A549 (cell line): ENCODE measurements at regions of chr17 and their contacts with region 1.

Region 1: DNA sequence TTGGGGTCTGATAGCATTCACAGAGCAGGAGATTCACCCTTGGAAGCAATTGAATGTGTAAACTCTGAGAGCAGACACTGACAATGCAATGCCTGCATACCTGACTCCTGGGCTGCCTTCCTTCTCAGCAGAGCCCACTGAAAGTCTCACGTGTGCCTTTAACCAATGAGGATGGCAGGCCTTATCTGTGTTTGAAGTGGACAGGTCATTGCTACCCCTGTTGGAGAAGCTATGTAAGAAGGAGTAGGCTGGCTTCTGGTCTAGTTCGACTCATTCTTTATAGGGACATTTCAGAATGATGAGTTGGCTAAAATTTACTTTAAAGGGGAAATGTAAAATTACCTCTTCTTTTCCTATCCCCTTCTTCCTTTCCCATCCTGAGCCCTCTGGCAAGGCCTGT is 446.3 kb downstream of the SLC39A11 start:
- DNase-seq: peak in 1 of 2 experiments; percentile 17
- ATAC-seq: peak in 1 of 2 experiments; percentile 45; a peak in 2 of 6 replicates
- H3K4me3 ChIP-seq: no peak overlapping the region
- H3K27ac ChIP-seq: peak overlapping the region in 1 of 2 experiments; percentile 22; a peak in 2 of 6 replicates
- H3K4me1 ChIP-seq: no peaks in the 10 kb centered on the region
- CTCF ChIP-seq: no peak
- EP300 ChIP-seq: no peak
- POLR2A ChIP-seq: no peak
- RAD21 ChIP-seq: no peak

Region 2: GRCh38 chr17:72393553-72393952 is 252.6 kb before region 1 on chr17:
- CTCF ChIA-PET with region 1: no interaction called
- POLR2A ChIA-PET with region 1: no interaction called
- DNase-seq: peak; percentile 72 to 74
- ATAC-seq: peak; percentile 26 to 58; a peak in 4 of 6 replicates
- H3K4me3 ChIP-seq: no peak overlapping the region
- H3K27ac ChIP-seq: peak overlapping the region; percentile 76 to 85
- H3K4me1 ChIP-seq: peaks cover 85% of the 10 kb centered on the region
- CTCF ChIP-seq: no peak
- EP300 ChIP-seq: peak in 1 of 2 experiments; percentile 41; a peak in 2 of 5 replicates
- POLR2A ChIP-seq: no peak
- RAD21 ChIP-seq: no peak; a peak in 1 of 5 replicates

Region 3: GRCh38 chr17:72580321-72581127 is 65.7 kb before region 1 on chr17:
- CTCF ChIA-PET with region 1: no interaction called
- POLR2A ChIA-PET with region 1: no interaction called
- DNase-seq: peak in 1 of 2 experiments; percentile 50
- ATAC-seq: peak; percentile 42 to 47
- H3K4me3 ChIP-seq: no peak overlapping the region
- H3K27ac ChIP-seq: peak overlapping the region in 1 of 2 experiments; percentile 45; a peak in 3 of 6 replicates
- H3K4me1 ChIP-seq: peaks cover 58% of the 10 kb centered on the region
- CTCF ChIP-seq: no peak
- EP300 ChIP-seq: no peak
- POLR2A ChIP-seq: no peak
- RAD21 ChIP-seq: no peak

Region 4: DNA sequence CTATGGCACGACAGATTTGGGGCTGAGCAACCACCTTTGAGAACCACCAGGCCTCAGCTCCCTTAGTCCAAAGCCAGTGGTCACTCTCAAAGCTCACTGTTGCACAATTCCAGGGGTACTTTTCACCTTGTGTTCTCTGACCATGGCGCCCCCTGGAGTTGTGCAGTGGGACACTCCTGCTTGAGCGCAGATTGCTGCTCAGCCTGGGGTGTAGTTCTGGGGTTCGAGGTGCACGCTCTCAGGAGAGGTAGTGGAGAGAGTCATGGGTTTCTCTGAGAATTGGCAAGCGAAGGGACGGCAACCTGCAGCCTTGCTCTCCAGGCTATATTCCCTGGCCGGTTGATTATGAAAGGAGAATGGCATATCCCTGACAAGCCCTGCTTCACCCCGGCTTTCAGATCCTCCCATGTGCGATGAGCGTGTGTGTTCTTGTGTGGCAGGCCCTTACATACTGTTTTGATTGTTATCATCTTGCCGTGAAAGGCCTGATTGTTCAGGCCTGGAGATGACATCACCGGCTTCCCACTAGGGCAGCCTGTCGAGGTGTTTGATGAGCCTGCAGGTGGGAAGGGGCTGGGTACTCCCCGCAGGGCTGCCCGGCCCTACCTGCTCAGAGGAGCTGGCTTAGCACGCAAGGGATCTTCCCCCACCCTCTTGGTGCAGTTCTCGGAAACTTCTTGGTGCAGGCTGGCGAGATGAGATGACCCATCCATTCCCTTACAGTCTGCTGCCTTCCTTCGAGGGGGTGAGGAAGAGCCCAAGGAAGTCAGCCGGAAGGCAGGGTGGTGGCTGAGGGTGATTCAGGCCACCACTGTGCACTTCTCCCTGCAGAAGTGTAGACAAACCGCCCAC is 15.1 kb after region 1 on chr17:
- CTCF ChIA-PET with region 1: interaction called, 10 read pairs
- POLR2A ChIA-PET with region 1: no interaction called
- DNase-seq: no peak
- ATAC-seq: no peak
- H3K4me3 ChIP-seq: no peak overlapping the region
- H3K27ac ChIP-seq: peak overlapping the region in 1 of 2 experiments; percentile 32; a peak in 3 of 6 replicates
- H3K4me1 ChIP-seq: peaks cover 17% of the 10 kb centered on the region
- CTCF ChIP-seq: 0 out of 3 replicates have a peak, but pooled peaks have one; percentile 23
- EP300 ChIP-seq: no peak
- POLR2A ChIP-seq: no peak
- RAD21 ChIP-seq: no peak